ENCODE measurements at regions of chr3 and their contacts with region 1.

Region 1: DNA sequence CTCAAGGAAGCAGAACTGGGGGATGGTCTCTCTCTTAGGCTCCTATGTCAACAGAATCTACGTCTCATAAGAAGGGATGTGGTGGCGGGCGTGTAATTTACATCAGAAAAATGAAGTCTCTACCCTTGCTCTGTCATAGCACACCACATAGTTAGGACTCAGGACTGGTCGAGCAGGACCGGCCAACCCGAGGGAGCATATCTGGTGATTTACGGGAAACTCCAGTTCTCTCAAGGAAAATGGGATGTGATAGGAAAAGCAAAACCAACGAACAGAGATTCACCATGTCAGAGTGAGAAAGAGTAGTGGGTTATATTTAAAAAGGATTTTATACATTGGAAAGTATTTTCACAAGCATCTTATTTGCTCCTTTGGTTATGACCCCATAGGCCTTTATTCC is 54.7 kb downstream of the IGF2BP2 start:
- DNase-seq: no peak
- H3K4me3 ChIP-seq: no peak overlapping the region
- H3K27ac ChIP-seq: no peak overlapping the region
- H3K4me1 ChIP-seq: peaks cover 0 to 25% of the 10 kb centered on the region in 2 experiments; a peak in 2 of 4 replicates
- H3K27me3 ChIP-seq: no peaks in the 10 kb centered on the region
- CTCF ChIP-seq: no peak
- EP300 ChIP-seq: no peak
- RAD21 ChIP-seq: no peak

Region 2: GRCh38 chr3:185677146-185677829 is 92.8 kb before region 1 on chr3:
- CTCF ChIA-PET with region 1: interaction called, 54 read pairs
- POLR2A ChIA-PET with region 1: no interaction called
- DNase-seq: peak; percentile 56
- H3K4me3 ChIP-seq: no peak overlapping the region
- H3K27ac ChIP-seq: peak overlapping the region in 1 of 2 experiments; percentile 5; a peak in 1 of 4 replicates
- H3K4me1 ChIP-seq: no peaks in the 10 kb centered on the region
- H3K27me3 ChIP-seq: no peaks in the 10 kb centered on the region
- CTCF ChIP-seq: peak; percentile 81
- EP300 ChIP-seq: no peak
- RAD21 ChIP-seq: peak; percentile 68

Region 3: GRCh38 chr3:185733980-185734724 is 36.0 kb before region 1 on chr3:
- CTCF ChIA-PET with region 1: interaction called, 45 read pairs
- POLR2A ChIA-PET with region 1: no interaction called
- DNase-seq: peak; percentile 57
- H3K4me3 ChIP-seq: no peak overlapping the region
- H3K27ac ChIP-seq: peak overlapping the region in 1 of 2 experiments; percentile 99; a peak in 2 of 4 replicates
- H3K4me1 ChIP-seq: peaks cover 0 to 66% of the 10 kb centered on the region in 2 experiments; a peak in 3 of 4 replicates
- H3K27me3 ChIP-seq: no peaks in the 10 kb centered on the region
- CTCF ChIP-seq: peak; percentile 71
- EP300 ChIP-seq: no peak
- RAD21 ChIP-seq: peak; percentile 77

Region 4: DNA sequence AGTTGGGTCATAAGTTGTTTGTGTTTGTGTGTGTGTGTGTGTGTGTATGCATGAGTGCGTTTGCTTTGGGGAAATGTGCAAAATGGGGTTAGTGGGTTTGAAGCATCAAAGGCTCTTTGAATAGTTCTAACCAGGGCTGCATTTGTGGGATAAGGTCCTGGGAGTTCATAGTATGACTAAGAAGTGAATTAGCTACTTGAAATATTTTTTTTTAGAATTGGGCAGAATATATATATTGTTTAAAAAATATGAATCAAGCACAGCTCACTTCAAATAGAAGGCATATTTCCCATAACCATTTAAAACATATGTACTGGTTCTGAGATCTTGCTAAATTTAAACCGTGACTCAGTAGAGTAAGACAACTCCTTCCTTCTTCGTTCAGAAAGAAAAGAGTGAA is 11.7 kb after region 1 on chr3:
- CTCF ChIA-PET with region 1: interaction called, 70 read pairs
- POLR2A ChIA-PET with region 1: no interaction called
- DNase-seq: no peak
- H3K4me3 ChIP-seq: 0 out of 4 replicates have a peak overlapping the region, but pooled peaks of 1 of the 2 experiments have one; percentile 6
- H3K27ac ChIP-seq: peak overlapping the region in 1 of 2 experiments; percentile 87; a peak in 3 of 4 replicates
- H3K4me1 ChIP-seq: peaks cover 0 to 12% of the 10 kb centered on the region in 2 experiments; a peak in 1 of 4 replicates
- H3K27me3 ChIP-seq: no peaks in the 10 kb centered on the region
- CTCF ChIP-seq: no peak
- EP300 ChIP-seq: peak in 1 of 2 experiments; percentile 44; a peak in 2 of 4 replicates
- RAD21 ChIP-seq: no peak

Measured in SK-N-SH (cell line).